Left cardiac atrium (tissue), 4 donors: ENCODE measurements at regions of chr9 and their contacts with region 1.

Region 1: GRCh38 chr9:20604562-20604961 is 17.7 kb downstream of the MLLT3 start:
- DNase-seq: no peak
- ATAC-seq: no peak

Region 2: DNA sequence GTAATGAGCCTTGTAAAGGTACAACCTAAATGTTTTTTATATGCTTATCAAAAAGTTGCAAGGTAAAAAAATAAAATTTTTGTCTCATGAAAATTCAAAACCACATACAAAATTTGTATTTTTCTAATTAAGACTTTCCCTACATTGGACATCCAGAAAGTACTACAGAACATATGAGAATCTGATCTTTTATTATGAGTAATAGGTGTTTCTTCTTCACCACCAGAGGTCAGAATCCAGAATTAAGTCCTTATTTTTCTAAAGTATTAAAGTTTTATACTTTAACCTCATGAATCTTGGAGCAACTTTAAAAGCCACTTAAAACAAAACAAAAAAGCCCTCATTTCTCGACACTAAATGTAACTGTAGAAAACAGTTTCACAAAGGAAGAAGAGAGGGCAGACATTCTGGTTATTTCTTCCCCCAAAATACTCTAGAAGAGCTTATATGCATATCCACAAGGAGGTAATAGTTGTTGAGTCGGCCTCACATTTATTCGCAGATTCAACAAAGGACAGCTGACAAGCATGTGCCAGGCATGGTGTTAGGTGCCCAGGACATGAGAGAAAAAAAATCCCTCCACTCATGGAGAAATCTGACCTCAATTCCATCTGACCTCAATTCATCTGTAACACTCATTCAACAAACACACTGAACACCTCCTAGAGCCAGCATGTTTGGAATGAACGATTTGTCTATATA is 51.5 kb before region 1 on chr9:
- intact Hi-C with region 1: loop called in 1 of 2 experiments (anchors 10 kb)
- DNase-seq: no peak
- ATAC-seq: no peak

Region 3: DNA sequence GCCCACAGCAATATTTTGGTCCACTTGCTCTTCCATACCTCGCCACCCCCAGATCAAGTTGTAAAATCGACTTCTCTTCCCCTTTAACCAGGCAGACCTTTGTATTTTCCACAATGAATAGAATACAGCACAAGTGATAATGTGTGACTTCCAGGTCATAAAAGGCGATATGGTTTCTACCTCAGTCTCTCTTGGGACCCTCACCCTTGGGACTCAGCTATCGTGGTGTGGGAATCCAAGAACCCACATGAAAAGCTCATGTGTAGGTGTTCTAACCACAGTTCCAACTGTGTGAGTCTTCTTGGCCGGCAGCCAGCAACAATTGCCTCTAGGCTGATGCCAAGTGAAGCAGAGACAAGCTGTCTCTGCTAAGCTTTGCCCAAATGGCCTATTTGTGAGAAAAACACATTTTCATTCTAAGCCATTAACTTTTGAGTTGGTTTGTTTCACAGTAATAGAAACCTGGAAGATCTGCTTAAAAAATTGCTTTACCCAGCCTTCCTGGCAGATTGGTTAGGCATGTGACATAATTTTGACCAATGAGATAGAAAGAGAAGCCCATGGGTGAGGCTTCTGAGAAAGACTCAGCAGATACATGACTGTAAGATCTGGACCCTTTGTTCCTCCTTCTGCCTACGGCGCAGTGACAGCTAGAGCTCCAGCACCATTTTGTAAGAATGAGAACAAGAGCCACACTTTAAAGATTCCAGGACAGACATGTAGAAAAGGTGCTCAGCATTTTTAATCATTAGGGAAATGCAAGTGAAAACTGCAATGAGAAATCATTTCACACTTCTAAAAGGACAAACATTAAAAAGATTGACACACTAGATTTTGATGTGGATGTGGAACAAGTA is 36.0 kb after region 1 on chr9:
- intact Hi-C with region 1: no loop called
- DNase-seq: peak; percentile 61
- ATAC-seq: peak; percentile 61 to 64